Sigmoid colon (tissue), 7 donors: ENCODE measurements at regions of chr3 and their contacts with region 1.

Region 1: DNA sequence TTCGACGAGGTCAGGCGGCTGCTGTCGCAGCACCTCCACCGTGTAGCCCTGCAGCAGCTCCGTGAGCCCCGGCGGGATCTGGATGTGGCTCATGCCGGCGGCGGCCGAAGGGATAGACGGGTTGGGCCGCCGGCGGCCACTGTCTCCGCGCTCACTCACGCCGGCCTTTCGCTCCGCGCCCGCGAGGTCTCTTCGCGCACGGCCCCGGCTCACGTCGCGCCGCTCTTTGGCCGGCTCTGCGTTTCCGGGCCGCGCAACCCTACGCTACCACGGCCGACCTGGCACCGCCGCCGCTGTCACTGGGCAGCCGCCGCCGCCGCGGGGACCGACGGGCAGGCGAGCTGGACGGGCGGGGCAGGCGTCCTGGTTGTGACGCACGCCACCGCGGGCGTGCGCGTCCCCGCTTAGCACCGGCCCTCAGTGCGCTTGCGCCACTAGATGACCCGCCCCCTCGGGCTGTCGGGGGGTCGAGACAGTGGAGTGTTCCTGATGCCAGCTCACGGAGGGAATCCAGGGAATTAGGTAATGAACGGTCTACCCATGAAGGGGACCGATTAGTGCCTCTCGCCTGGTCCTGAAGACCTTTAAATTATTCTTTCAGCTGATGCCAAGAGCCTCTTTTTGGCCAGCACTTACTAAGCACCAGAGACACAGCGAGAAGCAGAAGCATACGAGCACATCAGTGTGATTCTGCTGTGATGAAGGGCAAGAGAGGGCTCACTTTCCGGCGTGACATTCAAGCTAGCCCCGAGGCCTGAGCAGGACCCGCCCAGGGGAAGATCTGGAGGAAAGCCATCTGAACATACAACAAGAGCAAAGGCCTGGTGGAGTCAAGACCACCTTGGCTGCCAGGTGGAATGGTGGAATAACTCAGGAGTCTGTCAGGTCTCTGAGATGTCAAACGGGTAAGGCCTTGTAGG is at the start of gene PRKAR2A:
- DNase-seq: peak; percentile 94
- H3K4me3 ChIP-seq: peak within 1 kb of the TSS; percentile 61 to 82 (median 80)
- H3K27ac ChIP-seq: peak within 1 kb of the TSS; percentile 89 to 96 (median 94)
- H3K4me1 ChIP-seq: peaks cover 0 to 26% (median 21%) of the 10 kb centered on the region in 4 donors
- H3K27me3 ChIP-seq: no peaks in the 10 kb centered on the region
- CTCF ChIP-seq: no peak
- EP300 ChIP-seq: no peak
- POLR2A ChIP-seq: peak in 1 of 2 donors; percentile 27
- total RNA-seq, gene PRKAR2A: 23.9 to 64.5 (median 26.7) TPM

Region 2: GRCh38 chr3:48685602-48686511 is 161.9 kb before region 1 on chr3 and contains the start of gene NCKIPSD:
- intact Hi-C with region 1: loop called (anchors 2 kb)
- DNase-seq: peak; percentile 93
- H3K4me3 ChIP-seq: peak within 1 kb of the TSS; percentile 65 to 94 (median 80)
- H3K27ac ChIP-seq: peak within 1 kb of the TSS; percentile 77 to 85 (median 80)
- H3K4me1 ChIP-seq: peaks cover 0 to 45% (median 36%) of the 10 kb centered on the region in 4 donors
- H3K27me3 ChIP-seq: no peaks in the 10 kb centered on the region
- CTCF ChIP-seq: peak; percentile 56 to 89 (median 81)
- EP300 ChIP-seq: no peak
- POLR2A ChIP-seq: peak in 1 of 2 donors; percentile 30
- total RNA-seq, gene NCKIPSD: 7.7 to 29.3 (median 22.8) TPM

Region 3: GRCh38 chr3:48898383-48899234 is 50.8 kb after region 1 on chr3 and contains the start of gene SLC25A20:
- intact Hi-C with region 1: loop called (anchors 2 kb)
- DNase-seq: peak; percentile 95
- H3K4me3 ChIP-seq: peak within 1 kb of the TSS; percentile 68 to 89 (median 72)
- H3K27ac ChIP-seq: peak within 1 kb of the TSS; percentile 74 to 90 (median 84)
- H3K4me1 ChIP-seq: peaks cover 0 to 20% (median 10%) of the 10 kb centered on the region in 4 donors
- H3K27me3 ChIP-seq: no peaks in the 10 kb centered on the region
- CTCF ChIP-seq: no peak
- EP300 ChIP-seq: peak in 1 of 4 donors; percentile 53
- POLR2A ChIP-seq: no peak
- total RNA-seq, gene SLC25A20: 18.2 to 29.1 (median 20.8) TPM

Region 4: DNA sequence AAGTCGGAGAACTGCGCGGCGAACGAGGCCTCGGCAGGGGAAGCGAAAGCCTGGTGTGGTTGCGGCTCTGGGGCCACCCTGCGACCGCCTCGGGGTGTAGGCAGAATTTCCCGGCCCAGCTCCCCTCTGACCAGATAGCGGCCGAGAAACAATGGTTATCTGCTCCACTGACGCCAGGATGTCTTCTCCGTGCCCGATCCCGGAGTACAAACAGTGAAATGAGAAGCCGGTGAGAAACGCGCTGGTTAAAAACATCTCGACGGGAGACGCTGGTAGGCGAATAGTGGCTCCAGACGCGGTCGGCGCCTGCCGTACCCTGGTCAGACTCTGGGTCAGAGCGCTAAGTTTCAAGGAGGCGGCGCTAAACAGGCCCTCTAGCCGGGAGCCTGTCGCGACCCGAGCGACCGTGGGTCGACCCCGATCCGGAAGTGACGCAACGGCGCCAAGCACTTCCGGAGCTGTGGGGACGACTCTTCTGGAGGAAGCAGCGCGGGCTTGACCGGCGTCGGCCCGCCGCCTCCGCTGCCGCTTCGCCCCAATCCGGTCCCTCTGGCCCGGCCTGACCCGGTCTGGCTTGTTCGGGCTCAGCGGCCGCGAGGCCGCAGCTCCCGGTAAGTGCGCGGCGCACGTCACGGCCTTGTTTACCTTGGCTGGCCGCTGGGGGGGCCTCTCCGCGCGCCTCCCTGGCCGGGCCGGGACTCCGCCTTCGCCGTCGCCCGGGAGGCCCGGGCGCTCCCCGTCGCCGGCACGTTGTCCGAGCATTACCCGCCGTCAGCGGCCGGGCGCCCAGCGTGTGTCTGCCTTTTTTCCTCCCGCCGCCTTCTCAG is 70.8 kb after region 1 on chr3 and contains the start of gene ARIH2:
- intact Hi-C with region 1: loop called (anchors 5 kb)
- DNase-seq: peak; percentile 96
- H3K4me3 ChIP-seq: peak within 1 kb of the TSS; percentile 89 to 91 (median 90)
- H3K27ac ChIP-seq: peak within 1 kb of the TSS; percentile 97 to 98 (median 98)
- H3K4me1 ChIP-seq: peaks cover 0 to 33% (median 28%) of the 10 kb centered on the region in 4 donors
- H3K27me3 ChIP-seq: no peaks in the 10 kb centered on the region
- CTCF ChIP-seq: no peak
- EP300 ChIP-seq: peak in 1 of 4 donors; percentile 12
- POLR2A ChIP-seq: peak; percentile 75 to 80
- total RNA-seq, gene ARIH2: 94.9 to 165 (median 116) TPM

Region 5: GRCh38 chr3:49523756-49524747 is 676.3 kb after region 1 on chr3:
- intact Hi-C with region 1: no loop called
- DNase-seq: no peak
- H3K4me3 ChIP-seq: no peak overlapping the region
- H3K27ac ChIP-seq: no peak overlapping the region
- H3K4me1 ChIP-seq: peaks cover 0 to 9% (median 7%) of the 10 kb centered on the region in 4 donors
- H3K27me3 ChIP-seq: no peaks in the 10 kb centered on the region
- CTCF ChIP-seq: no peak
- EP300 ChIP-seq: no peak
- POLR2A ChIP-seq: no peak